ENCODE measurements at regions of chr17 and their contacts with region 1.

Region 1: GRCh38 chr17:74379495-74380085 is 12.3 kb downstream of the GPR142 start:
- DNase-seq: no peak
- H3K4me3 ChIP-seq: no peak overlapping the region
- H3K27me3 ChIP-seq: no peaks in the 10 kb centered on the region
- CTCF ChIP-seq: peak; percentile 91

Region 2: DNA sequence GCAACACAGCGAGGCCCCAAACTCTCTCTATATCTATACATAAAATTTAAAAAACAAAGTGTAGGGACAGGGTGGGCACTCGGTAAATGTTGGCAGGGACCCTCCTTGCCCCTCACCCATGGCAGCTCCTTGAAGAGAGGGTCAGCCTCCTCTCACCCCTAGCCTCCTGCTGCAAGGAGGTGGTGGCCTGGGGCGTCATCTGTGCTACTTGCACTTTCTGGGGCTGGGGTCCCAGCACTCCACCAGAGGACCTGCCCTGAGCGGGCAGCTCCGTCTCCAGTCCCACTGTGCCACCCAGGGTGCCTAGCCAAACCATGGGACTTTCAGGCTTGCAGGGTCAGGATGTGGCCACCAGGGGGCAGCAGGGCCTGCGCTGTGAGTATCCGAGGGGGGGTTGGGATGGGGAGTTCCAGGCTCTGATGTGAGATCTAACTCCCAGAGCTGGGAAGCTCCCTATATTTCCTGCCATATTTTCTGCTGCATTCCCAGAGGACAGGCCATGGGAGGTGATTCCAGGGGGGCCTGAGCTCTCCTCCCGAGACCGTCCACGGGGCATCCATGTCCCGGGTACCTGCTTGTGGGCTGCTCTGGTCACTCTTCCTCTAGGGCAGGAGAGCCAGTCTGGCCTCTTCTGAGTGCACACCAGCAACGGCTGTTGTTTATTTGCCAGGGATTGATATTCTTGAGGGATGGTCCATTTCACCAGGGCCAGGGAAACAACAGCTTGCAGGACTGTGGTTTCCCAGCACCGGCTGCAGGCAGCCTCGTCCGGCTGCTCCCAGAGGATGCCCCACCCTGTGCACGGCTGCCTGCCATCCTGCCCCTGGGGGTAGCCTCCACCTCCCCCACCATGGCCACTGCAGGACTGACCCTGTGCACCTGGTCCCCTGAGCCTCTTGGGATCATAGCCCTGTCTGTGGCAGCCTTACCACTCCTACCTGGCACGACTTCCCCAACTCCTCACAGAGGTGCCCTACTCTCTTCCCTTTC is 11.2 kb before region 1 on chr17:
- CTCF ChIA-PET with region 1: interaction called, 39 read pairs
- POLR2A ChIA-PET with region 1: no interaction called
- DNase-seq: no peak
- H3K4me3 ChIP-seq: no peak overlapping the region
- H3K27me3 ChIP-seq: no peaks in the 10 kb centered on the region
- CTCF ChIP-seq: peak; percentile 98

Region 3: GRCh38 chr17:74452033-74452840 is 72.6 kb after region 1 on chr17:
- CTCF ChIA-PET with region 1: interaction called, 22 read pairs
- POLR2A ChIA-PET with region 1: no interaction called
- DNase-seq: no peak
- H3K4me3 ChIP-seq: no peak overlapping the region
- H3K27me3 ChIP-seq: no peaks in the 10 kb centered on the region
- CTCF ChIP-seq: no peak

Measured in BJ (cell line).